IMR-90 (cell line): ENCODE measurements at regions of chr14 and their contacts with region 1.

Region 1: DNA sequence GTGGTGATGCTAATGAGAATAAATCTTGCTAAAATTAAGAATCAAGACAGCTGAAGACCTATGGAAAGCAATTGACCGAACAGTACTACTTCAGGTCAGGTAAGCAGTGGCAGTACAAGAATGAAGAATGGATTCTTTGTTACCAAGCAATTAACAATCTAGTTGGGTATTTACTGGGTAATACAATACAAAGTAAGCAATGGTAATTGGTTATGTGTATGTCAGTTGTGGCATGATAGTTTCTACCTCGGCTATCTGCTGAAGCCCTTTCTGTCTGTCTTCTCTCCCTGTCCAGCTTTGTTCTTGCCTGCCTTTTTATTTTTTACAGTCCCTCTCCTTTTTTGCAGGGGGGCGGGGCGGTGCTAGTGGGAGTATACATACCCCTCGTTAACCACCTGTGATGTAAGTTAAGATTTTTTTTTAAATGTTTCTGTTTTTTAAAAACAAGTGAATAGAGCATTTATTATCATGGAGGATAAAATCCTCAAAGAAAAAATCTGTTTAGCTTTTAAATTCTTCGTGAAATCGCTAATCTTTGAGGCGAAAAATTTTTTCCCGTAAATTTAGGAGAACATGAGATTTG is 75.9 kb downstream of the RCOR1 start:
- DNase-seq: no peak
- ATAC-seq: no peak
- H3K4me3 ChIP-seq: no peak overlapping the region
- H3K27ac ChIP-seq: no peak overlapping the region
- H3K4me1 ChIP-seq: no peaks in the 10 kb centered on the region
- H3K27me3 ChIP-seq: no peaks in the 10 kb centered on the region
- CTCF ChIP-seq: no peak
- POLR2A ChIP-seq: no peak
- RAD21 ChIP-seq: no peak

Region 2: GRCh38 chr14:102516531-102517415 is 151.6 kb before region 1 on chr14:
- CTCF ChIA-PET with region 1: no interaction called
- POLR2A ChIA-PET with region 1: interaction called, 10 read pairs
- dilution Hi-C with region 1: no loop called
- in situ Hi-C with region 1: no loop called
- intact Hi-C with region 1: no loop called
- DNase-seq: no peak
- ATAC-seq: peak; percentile 97
- H3K4me3 ChIP-seq: peak overlapping the region; percentile 57
- H3K27ac ChIP-seq: peak overlapping the region; percentile 6; the same call in 1 of the 2 replicates
- H3K4me1 ChIP-seq: peaks cover 2% of the 10 kb centered on the region; the same call in 1 of the 2 replicates
- H3K27me3 ChIP-seq: no peaks in the 10 kb centered on the region
- CTCF ChIP-seq: peak; percentile 78
- POLR2A ChIP-seq: no peak
- RAD21 ChIP-seq: peak; percentile 77

Region 3: GRCh38 chr14:102708494-102708893 is 40.1 kb after region 1 on chr14:
- CTCF ChIA-PET with region 1: no interaction called
- POLR2A ChIA-PET with region 1: no interaction called
- dilution Hi-C with region 1: no loop called
- in situ Hi-C with region 1: no loop called
- intact Hi-C with region 1: no loop called
- DNase-seq: no peak
- ATAC-seq: no peak
- H3K4me3 ChIP-seq: no peak overlapping the region
- H3K27ac ChIP-seq: no peak overlapping the region
- H3K4me1 ChIP-seq: no peaks in the 10 kb centered on the region
- H3K27me3 ChIP-seq: no peaks in the 10 kb centered on the region
- CTCF ChIP-seq: no peak
- POLR2A ChIP-seq: no peak
- RAD21 ChIP-seq: no peak

Region 4: DNA sequence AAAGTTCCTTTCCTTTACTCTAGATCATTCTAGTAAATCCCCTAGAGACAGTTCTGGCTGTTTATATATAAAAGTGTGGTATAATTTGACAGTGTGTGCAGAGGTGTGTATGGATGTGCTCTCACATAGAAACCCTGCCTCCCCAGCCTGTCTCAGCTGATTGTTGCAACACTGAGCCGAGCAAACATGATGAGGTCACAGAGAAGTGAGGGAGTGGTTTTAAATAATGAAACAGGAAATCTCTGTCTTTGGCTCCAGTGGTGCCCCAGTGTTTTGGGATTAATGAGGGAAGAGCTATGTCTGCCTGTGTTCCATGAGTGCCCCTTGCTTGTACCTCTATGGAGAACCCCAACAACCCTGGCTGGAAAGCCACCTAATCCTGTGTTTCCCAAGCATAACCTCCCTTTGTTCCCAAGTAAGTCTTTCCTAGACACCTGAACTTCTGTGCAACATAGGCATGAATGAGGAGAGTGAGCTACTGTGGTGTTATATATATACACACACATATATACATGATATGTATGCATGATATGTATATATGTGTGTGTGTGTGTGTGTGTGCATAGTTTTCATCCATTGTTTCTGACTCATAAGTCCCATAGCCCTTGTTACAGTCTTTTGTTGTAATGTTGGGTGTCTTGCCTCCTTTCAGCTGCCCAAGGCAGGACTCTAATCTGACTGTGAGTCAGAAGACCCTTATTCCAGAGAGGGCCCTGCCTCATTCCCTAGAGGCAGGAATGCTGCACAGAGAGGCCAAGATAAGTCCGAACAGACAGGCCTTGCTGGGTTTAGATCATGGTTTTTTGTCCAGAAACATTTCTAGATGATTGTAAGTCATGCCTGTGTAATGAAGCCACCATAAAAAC is 126.9 kb after region 1 on chr14:
- CTCF ChIA-PET with region 1: no interaction called
- POLR2A ChIA-PET with region 1: no interaction called
- dilution Hi-C with region 1: no loop called
- in situ Hi-C with region 1: no loop called
- intact Hi-C with region 1: no loop called
- DNase-seq: peak; percentile 91
- ATAC-seq: peak; percentile 85
- H3K4me3 ChIP-seq: no peak overlapping the region
- H3K27ac ChIP-seq: peak overlapping the region; percentile 72
- H3K4me1 ChIP-seq: peaks cover 16% of the 10 kb centered on the region
- H3K27me3 ChIP-seq: no peaks in the 10 kb centered on the region
- CTCF ChIP-seq: peak; percentile 62
- POLR2A ChIP-seq: no peak
- RAD21 ChIP-seq: peak; percentile 42

Region 5: GRCh38 chr14:103281496-103282231 is 613.3 kb after region 1 on chr14:
- CTCF ChIA-PET with region 1: no interaction called
- POLR2A ChIA-PET with region 1: no interaction called
- dilution Hi-C with region 1: no loop called
- in situ Hi-C with region 1: no loop called
- intact Hi-C with region 1: no loop called
- DNase-seq: peak; percentile 62
- ATAC-seq: peak; percentile 95
- H3K4me3 ChIP-seq: no peak overlapping the region
- H3K27ac ChIP-seq: no peak overlapping the region
- H3K4me1 ChIP-seq: peaks cover 4% of the 10 kb centered on the region; the same call in 1 of the 2 replicates
- H3K27me3 ChIP-seq: peaks cover 50% of the 10 kb centered on the region
- CTCF ChIP-seq: peak; percentile 61
- POLR2A ChIP-seq: no peak
- RAD21 ChIP-seq: peak; percentile 61